ENCODE measurements at regions of chr13 and their contacts with region 1.

Region 1: GRCh38 chr13:33110713-33111413 is 94.6 kb downstream of the KL start:
- DNase-seq: no peak
- ATAC-seq: peak; percentile 63
- H3K4me3 ChIP-seq: no peak overlapping the region
- H3K27ac ChIP-seq: peak overlapping the region; percentile 91
- H3K4me1 ChIP-seq: peaks cover 54% of the 10 kb centered on the region
- H3K27me3 ChIP-seq: no peaks in the 10 kb centered on the region
- CTCF ChIP-seq: no peak
- EP300 ChIP-seq: peak; percentile 30 to 35; a peak in 2 of 4 replicates
- POLR2A ChIP-seq: 0 out of 2 replicates have a peak, but pooled peaks have one; percentile 17
- RAD21 ChIP-seq: peak; percentile 24; the same call in 1 of the 2 replicates

Region 2: GRCh38 chr13:33092073-33092987 is 18.5 kb before region 1 on chr13:
- CTCF ChIA-PET with region 1: interaction called, 11 read pairs
- POLR2A ChIA-PET with region 1: interaction called, 4 read pairs
- RAD21 ChIA-PET with region 1: interaction called, 4 read pairs
- SMC1A ChIA-PET with region 1: interaction called, 13 read pairs
- in situ Hi-C with region 1: no loop called
- intact Hi-C with region 1: no loop called
- DNase-seq: no peak
- ATAC-seq: no peak
- H3K4me3 ChIP-seq: no peak overlapping the region
- H3K27ac ChIP-seq: no peak overlapping the region
- H3K4me1 ChIP-seq: no peaks in the 10 kb centered on the region
- H3K27me3 ChIP-seq: no peaks in the 10 kb centered on the region
- CTCF ChIP-seq: no peak
- EP300 ChIP-seq: no peak
- POLR2A ChIP-seq: no peak
- RAD21 ChIP-seq: no peak

Region 3: GRCh38 chr13:33132644-33133440 is 22.0 kb after region 1 on chr13:
- CTCF ChIA-PET with region 1: interaction called, 35 read pairs
- POLR2A ChIA-PET with region 1: interaction called, 12 read pairs
- RAD21 ChIA-PET with region 1: interaction called, 7 read pairs
- SMC1A ChIA-PET with region 1: interaction called, 7 read pairs
- in situ Hi-C with region 1: no loop called
- intact Hi-C with region 1: no loop called
- DNase-seq: no peak
- ATAC-seq: no peak
- H3K4me3 ChIP-seq: no peak overlapping the region
- H3K27ac ChIP-seq: no peak overlapping the region
- H3K4me1 ChIP-seq: no peaks in the 10 kb centered on the region
- H3K27me3 ChIP-seq: no peaks in the 10 kb centered on the region
- CTCF ChIP-seq: no peak
- EP300 ChIP-seq: no peak
- POLR2A ChIP-seq: no peak
- RAD21 ChIP-seq: no peak

Region 4: GRCh38 chr13:33146843-33147611 is 36.2 kb after region 1 on chr13:
- CTCF ChIA-PET with region 1: interaction called, 52 read pairs
- POLR2A ChIA-PET with region 1: interaction called, 62 read pairs
- RAD21 ChIA-PET with region 1: interaction called, 80 read pairs
- SMC1A ChIA-PET with region 1: interaction called, 95 read pairs
- in situ Hi-C with region 1: no loop called
- intact Hi-C with region 1: loop called (anchors 2 kb)
- DNase-seq: peak; percentile 98
- ATAC-seq: peak; percentile 63
- H3K4me3 ChIP-seq: no peak overlapping the region
- H3K27ac ChIP-seq: peak overlapping the region; percentile 98
- H3K4me1 ChIP-seq: peaks cover 59% of the 10 kb centered on the region
- H3K27me3 ChIP-seq: no peaks in the 10 kb centered on the region
- CTCF ChIP-seq: no peak
- EP300 ChIP-seq: peak; percentile 99
- POLR2A ChIP-seq: no peak
- RAD21 ChIP-seq: peak; percentile 37; the same call in 1 of the 2 replicates

Region 5: DNA sequence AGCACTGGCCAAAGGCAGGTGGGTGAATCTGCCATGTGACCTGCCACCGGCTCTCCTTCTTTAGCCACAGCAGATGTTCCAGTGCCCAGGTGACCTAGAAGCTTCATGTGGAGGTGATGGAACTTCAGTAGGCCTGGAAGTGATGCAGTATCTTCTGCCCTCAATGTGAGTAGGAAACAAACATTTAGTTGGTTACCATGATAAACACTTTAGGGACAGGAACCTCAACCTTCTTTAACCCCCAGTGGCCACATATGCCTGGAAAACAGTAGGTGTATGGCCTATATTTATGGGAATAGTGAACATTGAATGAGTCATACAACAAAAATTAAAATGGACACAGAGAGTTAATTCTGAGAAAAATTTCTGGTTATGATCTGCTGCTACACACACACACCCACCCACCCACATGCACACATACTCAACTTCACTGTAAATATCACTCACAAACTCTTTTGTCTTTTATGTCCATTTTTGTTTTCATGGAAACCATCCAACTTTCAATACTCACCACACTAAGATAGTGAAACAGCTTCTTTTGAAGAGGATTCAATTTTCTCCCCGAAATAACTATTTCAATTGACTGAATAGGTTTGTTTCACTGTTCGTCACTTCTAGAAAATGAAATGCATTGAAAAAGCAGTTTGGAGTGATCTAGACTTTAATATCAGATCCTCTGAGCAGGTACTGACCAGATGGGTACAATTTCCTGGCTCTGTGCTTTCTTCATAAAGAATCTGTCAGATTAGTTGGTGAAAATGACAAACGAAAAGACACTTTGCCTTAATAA is 77.4 kb after region 1 on chr13:
- CTCF ChIA-PET with region 1: interaction called, 12 read pairs
- POLR2A ChIA-PET with region 1: interaction called, 9 read pairs
- RAD21 ChIA-PET with region 1: interaction called, 35 read pairs
- SMC1A ChIA-PET with region 1: interaction called, 34 read pairs
- in situ Hi-C with region 1: no loop called
- intact Hi-C with region 1: no loop called
- DNase-seq: peak; percentile 79
- ATAC-seq: peak; percentile 75
- H3K4me3 ChIP-seq: peak overlapping the region; percentile 24; the same call in 1 of the 2 replicates
- H3K27ac ChIP-seq: peak overlapping the region; percentile 93
- H3K4me1 ChIP-seq: peaks cover 31% of the 10 kb centered on the region
- H3K27me3 ChIP-seq: no peaks in the 10 kb centered on the region
- CTCF ChIP-seq: no peak
- EP300 ChIP-seq: peak; percentile 49 to 56
- POLR2A ChIP-seq: no peak
- RAD21 ChIP-seq: peak; percentile 13; the same call in 1 of the 2 replicates

Region 6: DNA sequence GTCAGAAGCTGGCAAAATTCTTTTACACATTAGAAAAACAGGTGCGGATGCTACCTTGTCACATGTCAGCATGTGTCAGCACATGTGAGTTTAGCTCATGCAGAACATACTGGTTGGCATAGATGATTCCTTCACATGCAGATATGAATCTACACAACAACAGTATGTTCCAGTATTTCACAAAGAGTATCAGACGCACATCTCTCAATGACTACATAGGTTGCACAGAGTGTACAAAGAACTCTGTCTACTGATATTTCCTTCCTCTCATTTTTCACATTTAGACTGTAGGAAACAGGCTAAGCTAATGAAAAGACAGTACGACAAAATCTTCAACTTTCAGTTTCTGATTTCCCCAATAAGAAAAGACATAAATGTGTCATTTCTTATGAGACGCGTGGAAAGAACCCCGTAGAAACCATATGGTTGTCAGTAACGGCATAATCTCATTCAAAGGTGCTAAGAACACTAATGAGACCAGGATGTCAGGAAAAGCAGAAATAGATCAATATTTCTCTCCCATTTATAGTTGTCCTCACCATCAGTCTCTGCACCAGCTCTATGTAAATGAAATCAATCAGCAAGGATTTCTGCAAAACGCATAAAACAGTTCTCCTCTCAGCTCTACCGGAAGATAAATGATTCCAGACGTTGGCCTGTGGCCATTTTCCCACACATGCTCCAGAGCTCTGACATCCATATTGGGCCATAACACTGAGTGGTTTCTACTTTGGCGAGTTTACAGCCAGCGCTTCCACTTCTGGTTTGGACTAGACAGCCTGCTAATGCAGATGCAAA is 93.5 kb after region 1 on chr13:
- CTCF ChIA-PET with region 1: interaction called, 25 read pairs
- POLR2A ChIA-PET with region 1: interaction called, 19 read pairs
- RAD21 ChIA-PET with region 1: interaction called, 61 read pairs
- SMC1A ChIA-PET with region 1: interaction called, 80 read pairs
- in situ Hi-C with region 1: no loop called
- intact Hi-C with region 1: no loop called
- DNase-seq: peak; percentile 78
- ATAC-seq: peak; percentile 40
- H3K4me3 ChIP-seq: peak overlapping the region; percentile 74
- H3K27ac ChIP-seq: peak overlapping the region; percentile 95
- H3K4me1 ChIP-seq: peaks cover 42% of the 10 kb centered on the region
- H3K27me3 ChIP-seq: no peaks in the 10 kb centered on the region
- CTCF ChIP-seq: no peak
- EP300 ChIP-seq: no peak; a peak in 3 of 4 replicates
- POLR2A ChIP-seq: no peak
- RAD21 ChIP-seq: no peak

Measured in GM12878 (cell line).